ENCODE measurements at regions of chr11 and their contacts with region 1.

Region 1: GRCh38 chr11:102940714-102941588 is 14.6 kb downstream of the MMP13 start:
- DNase-seq: no peak
- H3K4me3 Mint-ChIP-seq: no peak overlapping the region
- H3K27ac Mint-ChIP-seq: no peak overlapping the region
- H3K4me1 Mint-ChIP-seq: peaks cover 2% of the 10 kb centered on the region
- H3K27me3 Mint-ChIP-seq: peaks cover 8% of the 10 kb centered on the region

Region 2: GRCh38 chr11:102733232-102733875 is 207.6 kb before region 1 on chr11:
- intact Hi-C with region 1: loop called (anchors 1 kb)
- DNase-seq: peak; percentile 24
- H3K4me3 Mint-ChIP-seq: no peak overlapping the region
- H3K27ac Mint-ChIP-seq: no peak overlapping the region
- H3K4me1 Mint-ChIP-seq: no peaks in the 10 kb centered on the region
- H3K27me3 Mint-ChIP-seq: peaks cover 3% of the 10 kb centered on the region

Region 3: DNA sequence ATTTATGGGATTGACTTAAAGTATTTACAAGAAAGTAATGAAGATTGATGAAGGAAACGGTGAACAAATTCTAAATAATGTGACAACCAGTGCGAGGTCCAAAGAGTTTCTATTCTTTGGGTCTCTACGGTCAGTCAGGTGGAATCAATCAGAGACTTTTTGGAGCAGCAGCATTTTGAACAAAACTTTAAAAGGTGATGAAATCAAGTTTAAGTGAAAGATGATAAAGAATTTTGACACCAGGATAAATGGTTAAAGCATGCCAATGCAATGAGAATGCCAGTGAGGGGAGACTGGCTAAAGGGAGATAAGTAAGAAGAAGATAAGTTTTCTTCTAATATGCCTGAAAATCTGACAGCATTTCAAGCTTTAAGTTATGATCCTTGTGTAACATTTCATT is 83.1 kb after region 1 on chr11:
- intact Hi-C with region 1: loop called (anchors 5 kb)
- DNase-seq: no peak
- H3K4me3 Mint-ChIP-seq: no peak overlapping the region
- H3K27ac Mint-ChIP-seq: no peak overlapping the region
- H3K4me1 Mint-ChIP-seq: peaks cover 12% of the 10 kb centered on the region
- H3K27me3 Mint-ChIP-seq: peaks cover 10% of the 10 kb centered on the region

Region 4: GRCh38 chr11:103055221-103055890 is 114.4 kb after region 1 on chr11:
- intact Hi-C with region 1: loop called (anchors 5 kb)
- DNase-seq: no peak
- H3K4me3 Mint-ChIP-seq: no peak overlapping the region
- H3K27ac Mint-ChIP-seq: no peak overlapping the region
- H3K4me1 Mint-ChIP-seq: peaks cover 3% of the 10 kb centered on the region
- H3K27me3 Mint-ChIP-seq: no peaks in the 10 kb centered on the region

Measured in activated T-helper 2 cell treated with anti-CD3 and anti-CD28 coated beads, Interferon-gamma antibody, Interleukin-2, Interleukin-4, amounts not matched to agents 10 μg/mL and 5 μg/mL and 100 μg/mL, durations not matched to agents 14 hours and 24 hours and 36 hours (primary cell).